Activated T-helper 1 cell treated with anti-CD3 and anti-CD28 coated beads, Interleukin-12 subunit alpha, Interleukin-12 subunit beta, Interleukin-2, Interleukin-4 antibody, amounts not matched to agents 30 ng/mL and 10 ng/mL and 1 ng/mL, durations not matched to agents 14 hours and 24 hours and 36 hours (primary cell): ENCODE measurements at regions of chr2 and their contacts with region 1.

Region 1: DNA sequence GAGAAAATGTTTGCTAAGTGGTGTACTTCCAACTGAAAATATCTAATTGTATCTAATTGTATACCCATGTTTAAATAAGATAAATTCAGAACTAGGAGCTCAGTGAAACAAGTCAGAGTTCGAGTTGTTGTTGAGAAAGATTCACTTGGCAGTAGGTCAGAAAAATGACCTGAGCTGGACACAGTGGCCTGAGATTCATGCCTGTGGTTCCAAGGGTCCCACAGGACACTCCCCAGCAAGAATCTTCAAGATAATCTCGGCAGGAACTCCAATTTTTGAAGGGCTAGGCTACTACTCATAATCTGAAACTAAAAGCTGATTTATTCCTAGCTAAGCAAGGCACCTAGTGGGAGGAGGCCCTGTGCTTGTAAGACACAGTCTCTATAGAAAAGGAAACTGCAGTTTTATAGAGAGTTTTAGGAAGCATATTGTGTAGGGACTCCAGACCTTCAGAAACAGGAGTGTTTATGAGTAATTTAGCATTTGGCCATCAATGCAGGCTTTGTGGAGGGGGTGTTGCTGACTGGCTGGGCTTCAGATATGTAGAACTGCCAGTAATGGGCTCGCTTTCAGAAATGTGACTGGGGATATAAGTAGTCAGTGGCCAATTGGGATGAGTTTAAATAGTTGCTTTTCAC is 43.2 kb downstream of the SP140 start:
- DNase-seq: no peak
- H3K4me3 Mint-ChIP-seq: peak overlapping the region; percentile 43
- H3K27ac Mint-ChIP-seq: peak overlapping the region; percentile 80
- H3K4me1 Mint-ChIP-seq: peaks cover 66% of the 10 kb centered on the region
- H3K27me3 Mint-ChIP-seq: no peaks in the 10 kb centered on the region

Region 2: DNA sequence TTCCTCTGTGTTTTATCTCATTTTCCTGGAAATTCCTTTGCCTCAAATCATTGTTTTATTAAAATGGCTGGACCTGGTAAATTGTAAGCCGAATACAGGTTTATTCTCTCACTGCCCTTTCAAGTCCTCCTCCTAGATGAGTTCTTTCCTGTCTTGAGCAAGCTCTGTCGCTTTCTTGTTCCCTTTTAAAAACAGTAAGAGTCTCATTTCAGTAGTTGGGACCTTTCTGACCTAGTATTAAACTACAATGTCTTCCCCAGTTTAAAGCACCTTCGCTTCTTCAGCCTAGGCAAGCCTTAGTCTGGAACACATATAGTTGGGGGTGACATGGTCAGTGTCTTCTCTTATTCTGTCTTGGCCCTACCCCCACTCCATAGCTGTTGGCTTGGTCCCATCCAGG is 17.3 kb after region 1 on chr2:
- intact Hi-C with region 1: loop called (anchors 1 kb)
- DNase-seq: no peak
- H3K4me3 Mint-ChIP-seq: no peak overlapping the region
- H3K27ac Mint-ChIP-seq: peak overlapping the region; percentile 6
- H3K4me1 Mint-ChIP-seq: peaks cover 35% of the 10 kb centered on the region
- H3K27me3 Mint-ChIP-seq: no peaks in the 10 kb centered on the region

Region 3: DNA sequence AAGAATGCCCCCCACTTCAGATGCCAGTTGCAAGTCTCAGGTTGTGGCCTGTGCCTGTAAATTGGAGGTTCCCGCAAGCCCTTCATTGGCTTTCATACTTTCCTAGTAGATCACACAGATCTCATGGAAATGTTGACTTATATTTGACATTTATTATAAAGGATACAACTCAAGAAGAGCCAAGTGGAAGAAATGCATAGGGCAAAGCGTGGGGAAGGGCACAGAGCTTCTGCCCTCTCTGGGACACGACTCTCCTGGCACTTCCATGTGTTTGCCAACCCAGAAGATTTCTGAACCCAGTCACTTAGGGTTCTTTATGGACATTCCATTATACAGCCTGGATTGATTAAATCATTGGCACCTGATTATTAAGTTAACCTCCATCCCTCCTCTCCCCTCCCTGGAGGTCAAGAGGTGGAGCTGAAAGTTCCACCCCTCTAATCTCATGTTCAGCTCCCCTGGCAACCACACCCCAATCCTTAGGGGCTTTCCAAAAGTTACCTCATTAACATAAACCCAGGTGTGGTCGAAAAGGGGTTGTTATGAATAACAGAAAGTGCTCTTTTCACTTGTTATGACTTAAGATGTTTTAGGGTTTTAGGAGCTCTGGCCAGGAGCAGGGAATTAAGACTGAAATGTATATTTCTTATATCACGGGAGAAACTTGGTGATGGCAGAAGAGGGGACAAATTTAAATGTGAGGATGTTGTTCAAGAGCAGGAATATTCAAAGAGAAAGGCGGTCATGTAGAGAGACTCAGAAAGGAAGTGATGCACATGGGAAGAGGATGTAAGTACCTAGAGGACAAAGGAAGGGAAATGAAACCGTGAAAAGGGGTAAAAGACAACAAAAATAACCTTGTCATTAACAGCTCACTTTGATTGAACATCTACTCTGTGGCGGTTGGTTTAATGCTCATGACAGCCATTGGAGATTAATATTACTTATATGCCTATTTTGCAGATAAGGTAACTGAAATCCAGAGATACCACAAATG is 179.0 kb after region 1 on chr2:
- intact Hi-C with region 1: loop called (anchors 5 kb)
- DNase-seq: peak; percentile 40
- H3K4me3 Mint-ChIP-seq: peak overlapping the region; percentile 58
- H3K27ac Mint-ChIP-seq: peak overlapping the region; percentile 96
- H3K4me1 Mint-ChIP-seq: peaks cover 71% of the 10 kb centered on the region
- H3K27me3 Mint-ChIP-seq: no peaks in the 10 kb centered on the region